ENCODE measurements at regions of chrX and their contacts with region 1.

Region 1: DNA sequence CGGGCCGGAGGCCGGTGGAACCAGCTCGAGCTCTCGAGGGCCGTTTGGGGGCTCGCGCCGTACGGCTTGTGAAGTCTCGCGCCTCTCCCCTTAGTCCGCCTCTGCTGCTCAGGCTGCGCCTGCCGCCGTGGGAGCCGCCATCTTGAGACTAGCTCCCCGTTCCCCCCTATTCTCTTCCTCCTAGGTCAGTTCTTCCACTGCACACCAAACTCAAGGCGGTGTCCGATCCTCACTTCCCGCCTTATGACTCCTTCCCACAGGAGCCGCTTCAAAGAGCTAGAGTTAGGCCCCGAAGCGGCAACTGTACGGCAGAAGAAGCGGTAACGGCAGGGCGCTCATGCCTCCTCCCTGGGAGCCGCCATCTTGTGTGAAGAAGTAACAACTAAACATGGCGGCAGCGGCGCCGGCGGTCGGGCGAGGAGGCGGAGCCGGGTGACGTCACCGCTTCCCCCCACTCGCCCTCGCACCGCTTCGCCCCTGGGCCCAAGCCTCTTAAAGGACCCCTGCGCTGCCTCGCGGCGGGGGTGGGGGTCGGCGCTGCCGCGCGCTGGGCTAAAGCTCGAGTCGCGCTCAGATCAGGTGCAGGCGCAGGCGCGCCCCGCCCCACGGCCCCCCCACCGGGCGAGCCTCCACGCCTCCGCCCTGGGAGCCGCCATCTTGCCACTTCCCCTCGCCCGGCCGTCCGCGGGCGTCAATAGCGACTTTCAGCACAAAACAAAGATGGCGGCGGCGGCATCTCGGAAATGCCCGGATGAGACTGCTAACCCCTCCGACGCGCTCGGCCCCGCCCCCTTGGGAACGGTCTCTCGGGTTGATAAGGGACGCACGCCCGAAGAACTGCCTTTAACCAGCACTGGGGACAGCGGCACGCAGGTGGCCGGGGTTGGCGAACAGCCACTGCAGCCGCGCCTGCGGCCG is at the start of gene HCFC1:
- DNase-seq: peak; percentile 78 to 96 (median 92)
- ATAC-seq: peak; percentile 45
- H3K4me3 ChIP-seq: peak within 1 kb of the TSS; percentile 94 to 97
- H3K4me3 Mint-ChIP-seq: peak within 1 kb of the TSS; percentile 100
- H3K27ac ChIP-seq: peak within 1 kb of the TSS; percentile 94 to 99
- H3K27ac Mint-ChIP-seq: peak within 1 kb of the TSS; percentile 100
- H3K4me1 ChIP-seq: peaks cover 36% of the 10 kb centered on the region
- H3K4me1 Mint-ChIP-seq: peaks cover 40% of the 10 kb centered on the region
- H3K27me3 ChIP-seq: no peaks in the 10 kb centered on the region
- H3K27me3 Mint-ChIP-seq: no peaks in the 10 kb centered on the region
- CTCF ChIP-seq: no peak
- total RNA-seq, gene HCFC1: 49.1 to 56.3 TPM

Region 2: GRCh38 chrX:153927922-153928760 is 43.6 kb before region 1 on chrX:
- CTCF ChIA-PET with region 1: interaction called, 7 read pairs
- POLR2A ChIA-PET with region 1: interaction called, 99 read pairs
- intact Hi-C with region 1: loop called (anchors 1 kb)
- DNase-seq: peak; percentile 81 to 97 (median 92)
- ATAC-seq: peak; percentile 69
- H3K4me3 ChIP-seq: peak overlapping the region; percentile 68 to 87
- H3K4me3 Mint-ChIP-seq: peak overlapping the region; percentile 87
- H3K27ac ChIP-seq: peak overlapping the region; percentile 95 to 98
- H3K27ac Mint-ChIP-seq: peak overlapping the region; percentile 99
- H3K4me1 ChIP-seq: peaks cover 14% of the 10 kb centered on the region
- H3K4me1 Mint-ChIP-seq: peaks cover 31% of the 10 kb centered on the region
- H3K27me3 ChIP-seq: no peaks in the 10 kb centered on the region
- H3K27me3 Mint-ChIP-seq: no peaks in the 10 kb centered on the region
- CTCF ChIP-seq: no peak

Region 3: GRCh38 chrX:154013614-154014360 is 42.1 kb after region 1 on chrX:
- CTCF ChIA-PET with region 1: interaction called, 7 read pairs
- POLR2A ChIA-PET with region 1: interaction called, 14 read pairs
- intact Hi-C with region 1: no loop called
- DNase-seq: peak in 8 of 9 experiments; percentile 25 to 72 (median 58)
- ATAC-seq: peak; percentile 87
- H3K4me3 ChIP-seq: no peak overlapping the region
- H3K4me3 Mint-ChIP-seq: no peak overlapping the region
- H3K27ac ChIP-seq: no peak overlapping the region
- H3K27ac Mint-ChIP-seq: no peak overlapping the region
- H3K4me1 ChIP-seq: peaks cover 15% of the 10 kb centered on the region
- H3K4me1 Mint-ChIP-seq: peaks cover 19% of the 10 kb centered on the region
- H3K27me3 ChIP-seq: no peaks in the 10 kb centered on the region
- H3K27me3 Mint-ChIP-seq: no peaks in the 10 kb centered on the region
- CTCF ChIP-seq: peak; percentile 73

Region 4: DNA sequence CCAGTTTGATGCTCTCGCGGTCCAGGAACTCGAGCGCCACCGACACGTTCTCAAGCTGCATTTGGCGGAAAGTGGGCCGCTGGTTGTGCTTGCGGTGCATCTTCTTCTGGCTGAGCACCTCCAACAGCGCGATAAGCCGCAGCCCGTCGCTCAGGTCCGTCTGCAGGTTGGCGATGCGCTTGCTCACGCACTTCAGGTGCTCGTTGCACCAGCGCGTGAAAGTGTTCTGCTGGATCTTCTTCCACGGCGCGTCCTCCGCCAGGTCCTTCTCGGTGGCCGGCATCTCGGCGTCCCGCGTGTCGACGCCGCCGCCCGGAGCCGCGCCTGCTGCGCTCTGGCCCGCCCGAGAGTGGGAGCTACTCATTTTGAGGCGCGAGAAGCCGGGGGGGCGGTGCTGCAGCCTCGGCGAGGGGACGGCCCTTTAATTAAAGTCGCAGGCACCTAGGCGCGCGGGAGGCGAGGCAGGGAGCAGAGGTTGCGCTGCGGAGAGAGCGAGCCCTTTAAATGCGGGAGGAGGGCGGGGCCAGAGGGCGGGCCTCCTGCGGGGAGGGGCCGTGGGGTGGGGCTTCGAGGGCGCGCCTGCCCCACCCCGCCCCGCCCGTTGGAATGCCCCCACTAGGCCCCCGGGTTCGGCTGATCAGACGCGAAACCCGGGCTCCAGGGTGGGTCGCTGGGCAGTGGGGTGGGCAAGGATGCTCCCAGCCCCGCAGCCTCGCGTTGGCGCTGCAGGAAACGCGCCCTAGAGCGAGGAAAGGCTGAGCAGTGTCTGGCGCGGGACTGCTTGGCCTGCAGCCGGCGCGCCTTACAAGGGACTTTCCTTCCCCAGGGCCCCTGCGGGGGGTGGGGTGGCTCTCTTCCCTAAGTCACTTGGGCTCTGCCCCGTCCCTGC is 399.4 kb after region 1 on chrX:
- CTCF ChIA-PET with region 1: no interaction called
- POLR2A ChIA-PET with region 1: interaction called, 3 read pairs
- intact Hi-C with region 1: loop called (anchors 2 to 5 kb)
- DNase-seq: peak; percentile 83 to 95 (median 91)
- ATAC-seq: peak; percentile 59
- H3K4me3 ChIP-seq: peak overlapping the region; percentile 81 to 89
- H3K4me3 Mint-ChIP-seq: peak overlapping the region; percentile 83
- H3K27ac ChIP-seq: peak overlapping the region; percentile 65 to 95
- H3K27ac Mint-ChIP-seq: peak overlapping the region; percentile 83
- H3K4me1 ChIP-seq: peaks cover 48% of the 10 kb centered on the region
- H3K4me1 Mint-ChIP-seq: peaks cover 21% of the 10 kb centered on the region
- H3K27me3 ChIP-seq: no peaks in the 10 kb centered on the region
- H3K27me3 Mint-ChIP-seq: no peaks in the 10 kb centered on the region
- CTCF ChIP-seq: no peak

Region 5: DNA sequence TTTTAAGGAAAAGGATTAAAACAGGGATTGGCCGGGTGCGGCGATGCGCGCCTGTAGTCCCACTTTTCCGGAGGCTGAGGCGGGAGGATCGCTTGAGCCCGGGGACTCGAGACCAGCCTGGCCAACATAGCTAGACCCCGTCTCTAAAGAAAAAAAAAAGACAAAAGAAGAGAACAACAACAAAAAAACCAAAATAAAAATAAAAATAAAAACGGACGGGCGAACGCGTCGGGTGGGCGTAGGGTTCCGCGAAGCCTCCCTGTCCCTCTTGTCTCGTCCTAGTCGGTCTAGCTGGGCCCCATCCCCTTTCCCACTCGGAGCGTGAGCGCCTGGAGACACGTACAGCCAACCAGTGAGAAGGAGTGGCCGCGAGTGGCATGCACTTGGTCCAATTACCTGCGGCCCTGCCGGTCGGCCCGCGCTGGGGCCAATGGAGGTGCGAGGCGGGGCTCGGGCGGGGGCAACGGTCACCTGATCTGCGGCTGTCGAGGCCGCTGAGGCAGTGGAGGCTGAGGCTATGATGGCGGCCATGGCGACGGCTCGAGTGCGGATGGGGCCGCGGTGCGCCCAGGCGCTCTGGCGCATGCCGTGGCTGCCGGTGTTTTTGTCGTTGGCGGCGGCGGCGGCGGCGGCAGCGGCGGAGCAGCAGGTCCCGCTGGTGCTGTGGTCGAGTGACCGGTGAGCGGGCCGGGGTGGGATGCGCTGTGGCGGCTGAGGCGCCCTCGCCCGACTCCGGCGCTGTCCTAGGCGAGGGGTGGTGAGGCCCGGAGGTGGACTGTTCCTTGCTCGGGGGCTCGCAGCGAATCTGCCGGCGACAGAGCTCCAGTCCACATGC is 456.7 kb after region 1 on chrX and contains the start of gene ATP6AP1:
- CTCF ChIA-PET with region 1: no interaction called
- POLR2A ChIA-PET with region 1: no interaction called
- intact Hi-C with region 1: loop called in 1 of 2 experiments (anchors 5 kb)
- DNase-seq: peak; percentile 71 to 94 (median 86)
- ATAC-seq: peak; percentile 97
- H3K4me3 ChIP-seq: peak within 1 kb of the TSS; percentile 63 to 67
- H3K4me3 Mint-ChIP-seq: peak within 1 kb of the TSS; percentile 82
- H3K27ac ChIP-seq: peak within 1 kb of the TSS; percentile 45 to 63
- H3K27ac Mint-ChIP-seq: peak within 1 kb of the TSS; percentile 86
- H3K4me1 ChIP-seq: peaks cover 12% of the 10 kb centered on the region
- H3K4me1 Mint-ChIP-seq: peaks cover 27% of the 10 kb centered on the region
- H3K27me3 ChIP-seq: no peaks in the 10 kb centered on the region
- H3K27me3 Mint-ChIP-seq: no peaks in the 10 kb centered on the region
- CTCF ChIP-seq: no peak
- total RNA-seq, gene ATP6AP1: 31.2 to 32.4 TPM

Region 6: DNA sequence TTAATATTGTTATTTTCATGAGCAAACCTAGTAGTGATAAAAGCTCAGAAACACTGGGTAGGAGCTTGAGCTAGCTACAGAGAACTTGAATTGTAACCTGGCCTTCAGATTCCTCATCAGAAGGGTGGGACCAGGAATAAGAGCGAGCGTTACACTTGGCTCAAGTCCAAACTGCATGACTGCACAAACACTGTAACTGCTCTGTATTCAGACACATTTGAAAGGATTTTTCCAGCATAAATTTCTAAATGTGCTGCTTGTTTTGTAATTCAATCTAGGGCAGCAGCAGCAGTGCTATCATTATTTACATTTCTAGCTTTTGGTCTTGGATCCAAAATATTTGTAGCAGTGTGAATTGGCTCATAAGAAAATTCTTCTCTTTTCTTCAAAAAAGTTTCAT is 1774.1 kb after region 1 on chrX:
- CTCF ChIA-PET with region 1: no interaction called
- POLR2A ChIA-PET with region 1: no interaction called
- intact Hi-C with region 1: no loop called
- DNase-seq: no peak
- ATAC-seq: no peak
- H3K4me3 ChIP-seq: no peak overlapping the region
- H3K4me3 Mint-ChIP-seq: no peak overlapping the region
- H3K27ac ChIP-seq: no peak overlapping the region
- H3K27ac Mint-ChIP-seq: no peak overlapping the region
- H3K4me1 ChIP-seq: no peaks in the 10 kb centered on the region
- H3K4me1 Mint-ChIP-seq: no peaks in the 10 kb centered on the region
- H3K27me3 ChIP-seq: no peaks in the 10 kb centered on the region
- H3K27me3 Mint-ChIP-seq: peaks cover 4% of the 10 kb centered on the region
- CTCF ChIP-seq: no peak

Measured in CD8-positive, alpha-beta T cell (primary cell).